ENCODE measurements at regions of chr13 and their contacts with region 1.

Region 1: GRCh38 chr13:111184458-111185401 is 69.6 kb downstream of the ARHGEF7 start:
- DNase-seq: peak; percentile 96
- ATAC-seq: peak; percentile 91
- H3K4me3 ChIP-seq: peak overlapping the region; percentile 21 to 60 (median 50)
- H3K4me3 Mint-ChIP-seq: peak overlapping the region; percentile 86
- H3K27ac ChIP-seq: peak overlapping the region; percentile 92 to 95
- H3K27ac Mint-ChIP-seq: peak overlapping the region; percentile 97
- H3K4me1 ChIP-seq: peaks cover 75 to 96% of the 10 kb centered on the region in 2 donors
- H3K4me1 Mint-ChIP-seq: peaks cover 97% of the 10 kb centered on the region
- H3K27me3 ChIP-seq: no peaks in the 10 kb centered on the region
- H3K27me3 Mint-ChIP-seq: no peaks in the 10 kb centered on the region
- CTCF ChIP-seq: no peak

Region 2: GRCh38 chr13:110715395-110716235 is 469.1 kb before region 1 on chr13:
- CTCF ChIA-PET with region 1: no interaction called
- POLR2A ChIA-PET with region 1: interaction called, 5 read pairs
- intact Hi-C with region 1: loop called (anchors 1 kb)
- DNase-seq: peak; percentile 99
- ATAC-seq: peak; percentile 56
- H3K4me3 ChIP-seq: peak overlapping the region; percentile 89 to 100 (median 100)
- H3K4me3 Mint-ChIP-seq: peak overlapping the region; percentile 96
- H3K27ac ChIP-seq: peak overlapping the region; percentile 82 to 86
- H3K27ac Mint-ChIP-seq: peak overlapping the region; percentile 96
- H3K4me1 ChIP-seq: peaks cover 28 to 30% of the 10 kb centered on the region in 2 donors
- H3K4me1 Mint-ChIP-seq: peaks cover 35% of the 10 kb centered on the region
- H3K27me3 ChIP-seq: no peaks in the 10 kb centered on the region
- H3K27me3 Mint-ChIP-seq: no peaks in the 10 kb centered on the region
- CTCF ChIP-seq: peak; percentile 30

Region 3: DNA sequence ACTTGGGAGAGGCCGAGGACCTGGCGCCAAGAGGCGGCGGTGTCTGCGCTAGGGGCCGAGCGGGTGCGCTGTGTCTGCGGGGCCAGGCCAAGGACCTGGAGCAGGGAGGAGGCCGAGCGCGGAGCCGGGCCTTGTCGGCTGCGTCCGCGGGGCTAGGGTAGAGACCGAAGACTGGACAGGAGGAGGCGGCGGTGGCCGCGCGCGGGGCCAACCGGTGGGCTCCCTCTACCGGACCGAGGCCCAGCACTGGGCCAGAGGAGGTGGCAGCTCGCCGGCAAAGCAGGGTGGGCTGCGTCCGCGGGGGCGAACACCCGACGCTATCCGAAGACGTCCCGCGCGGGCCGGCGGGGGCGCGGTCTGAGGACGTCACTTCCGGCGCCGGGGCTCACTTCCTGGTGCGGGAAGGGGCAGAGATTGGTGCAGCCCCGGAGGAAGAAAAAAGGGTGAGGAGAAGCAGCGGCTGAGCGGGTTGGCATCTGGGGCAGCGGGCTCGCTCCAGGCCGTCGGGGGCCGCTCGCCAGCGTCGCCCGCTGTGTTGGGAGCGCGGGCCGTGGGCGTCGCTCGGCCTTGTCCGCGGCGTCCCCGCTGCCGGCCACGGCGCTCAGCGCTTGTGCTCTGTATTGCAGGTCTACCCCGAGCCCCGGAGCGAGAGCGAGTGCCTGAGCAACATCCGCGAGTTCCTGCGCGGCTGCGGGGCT is 31.3 kb before region 1 on chr13:
- CTCF ChIA-PET with region 1: interaction called, 5 read pairs
- POLR2A ChIA-PET with region 1: no interaction called
- intact Hi-C with region 1: loop called (anchors 1 kb)
- DNase-seq: peak; percentile 96
- ATAC-seq: peak; percentile 82
- H3K4me3 ChIP-seq: peak overlapping the region; percentile 58 to 91 (median 69)
- H3K4me3 Mint-ChIP-seq: peak overlapping the region; percentile 96
- H3K27ac ChIP-seq: peak overlapping the region; percentile 64 to 86
- H3K27ac Mint-ChIP-seq: peak overlapping the region; percentile 97
- H3K4me1 ChIP-seq: peaks cover 18 to 22% of the 10 kb centered on the region in 2 donors
- H3K4me1 Mint-ChIP-seq: peaks cover 30% of the 10 kb centered on the region
- H3K27me3 ChIP-seq: peaks cover 0 to 3% (median 0%) of the 10 kb centered on the region in 4 experiments
- H3K27me3 Mint-ChIP-seq: peaks cover 3% of the 10 kb centered on the region
- CTCF ChIP-seq: no peak

Region 4: GRCh38 chr13:111202745-111203144 is 18.0 kb after region 1 on chr13:
- CTCF ChIA-PET with region 1: interaction called, 22 read pairs
- POLR2A ChIA-PET with region 1: interaction called, 4 read pairs
- intact Hi-C with region 1: loop called (anchors 1 kb)
- DNase-seq: peak; percentile 59
- ATAC-seq: peak; percentile 50
- H3K4me3 ChIP-seq: no peak overlapping the region
- H3K4me3 Mint-ChIP-seq: peak overlapping the region; percentile 76
- H3K27ac ChIP-seq: peak overlapping the region; percentile 43 to 76
- H3K27ac Mint-ChIP-seq: peak overlapping the region; percentile 62
- H3K4me1 ChIP-seq: peaks cover 62 to 77% of the 10 kb centered on the region in 2 donors
- H3K4me1 Mint-ChIP-seq: peaks cover 81% of the 10 kb centered on the region
- H3K27me3 ChIP-seq: no peaks in the 10 kb centered on the region
- H3K27me3 Mint-ChIP-seq: no peaks in the 10 kb centered on the region
- CTCF ChIP-seq: no peak

Region 5: GRCh38 chr13:111225810-111226546 is 41.2 kb after region 1 on chr13:
- CTCF ChIA-PET with region 1: interaction called, 15 read pairs
- POLR2A ChIA-PET with region 1: interaction called, 7 read pairs
- intact Hi-C with region 1: loop called (anchors 2 kb)
- DNase-seq: no peak
- ATAC-seq: no peak
- H3K4me3 ChIP-seq: no peak overlapping the region
- H3K4me3 Mint-ChIP-seq: no peak overlapping the region
- H3K27ac ChIP-seq: no peak overlapping the region
- H3K27ac Mint-ChIP-seq: no peak overlapping the region
- H3K4me1 ChIP-seq: no peaks in the 10 kb centered on the region
- H3K4me1 Mint-ChIP-seq: peaks cover 14% of the 10 kb centered on the region
- H3K27me3 ChIP-seq: no peaks in the 10 kb centered on the region
- H3K27me3 Mint-ChIP-seq: no peaks in the 10 kb centered on the region
- CTCF ChIP-seq: no peak